ENCODE measurements at regions of chr5 and their contacts with region 1.

Region 1: DNA sequence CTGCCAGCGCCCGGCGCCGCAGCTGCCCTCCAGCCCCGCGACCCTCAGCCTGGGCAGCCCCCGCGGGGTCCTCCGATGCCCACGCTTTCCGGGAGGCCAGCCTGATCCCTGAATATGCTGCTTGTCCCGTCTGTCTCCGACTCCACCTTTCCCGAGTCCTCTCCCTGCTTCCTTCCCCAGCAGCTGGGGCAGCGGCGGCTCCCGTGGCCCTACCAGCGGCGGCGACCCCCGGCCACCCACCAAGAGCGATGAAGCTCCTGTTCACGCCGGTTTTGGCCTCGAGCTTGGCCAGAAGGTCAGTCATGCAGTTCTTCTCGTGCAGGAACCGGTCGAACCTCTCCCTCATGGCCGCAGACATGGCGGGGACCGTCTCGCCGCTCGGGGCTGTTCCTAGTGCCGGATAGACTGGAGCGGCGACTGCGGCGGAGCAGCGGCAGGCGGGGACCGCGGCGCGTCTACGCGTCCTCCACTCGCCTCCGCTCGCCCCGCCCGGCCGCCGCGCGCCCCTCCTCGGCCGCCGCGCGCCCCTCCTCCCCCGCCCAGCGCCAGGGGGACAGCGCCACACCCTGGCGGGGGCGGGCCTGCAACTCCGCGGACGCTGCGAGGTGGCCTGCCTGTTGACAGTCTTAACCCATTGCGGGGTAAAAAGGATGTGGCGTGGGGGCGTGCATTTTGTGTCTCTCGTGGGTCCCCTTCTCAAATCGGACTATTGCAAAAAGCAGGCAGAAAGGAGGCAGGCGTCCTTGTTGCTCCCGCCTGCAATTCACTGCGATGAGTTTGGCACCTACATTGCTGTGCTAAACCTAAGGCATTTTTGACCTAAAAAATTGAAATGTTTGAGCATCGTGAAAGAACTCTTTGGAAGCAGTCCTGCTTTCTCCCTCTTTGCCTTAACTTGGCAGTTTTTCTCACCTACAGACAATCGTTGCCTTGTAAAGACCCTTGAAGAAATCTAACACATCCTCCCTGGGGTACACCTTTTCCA is at the start of gene REEP5:
- DNase-seq: peak; percentile 91
- total RNA-seq, gene REEP5: 119 TPM

Region 2: DNA sequence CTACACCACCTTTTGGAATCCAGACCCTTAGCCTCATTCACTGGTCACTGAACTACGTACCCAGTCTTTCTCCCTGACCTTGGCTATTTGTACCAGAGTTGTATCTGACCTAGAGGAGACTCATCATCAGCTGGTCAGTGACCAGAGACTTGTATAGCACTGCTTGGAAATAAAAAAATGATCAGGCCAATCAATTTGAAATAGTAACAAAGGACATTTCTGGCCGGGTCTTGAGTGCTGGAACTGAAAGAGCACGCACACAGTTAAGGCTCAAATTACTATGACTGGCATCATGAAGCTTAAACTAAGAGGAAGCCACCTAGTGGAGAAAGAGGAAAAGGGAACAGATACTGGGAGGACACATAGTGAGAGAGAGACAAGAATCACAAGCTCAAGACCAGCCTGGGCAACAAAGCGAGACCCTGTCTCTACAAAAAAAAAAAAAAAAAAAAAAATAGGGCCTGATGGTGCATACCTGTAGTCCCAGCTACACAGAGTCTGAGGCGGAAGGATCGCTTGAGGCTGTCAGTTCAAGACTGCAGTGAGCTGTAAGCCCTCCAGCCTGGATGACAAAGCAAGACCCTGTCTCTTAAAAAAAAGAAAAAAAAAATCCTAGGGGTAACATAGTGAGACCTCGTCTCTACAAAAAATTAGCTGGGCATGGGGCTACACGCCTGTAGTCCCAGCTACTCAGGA is 73.9 kb before region 1 on chr5:
- intact Hi-C with region 1: loop called (anchors 5 kb)
- DNase-seq: no peak

Region 3: DNA sequence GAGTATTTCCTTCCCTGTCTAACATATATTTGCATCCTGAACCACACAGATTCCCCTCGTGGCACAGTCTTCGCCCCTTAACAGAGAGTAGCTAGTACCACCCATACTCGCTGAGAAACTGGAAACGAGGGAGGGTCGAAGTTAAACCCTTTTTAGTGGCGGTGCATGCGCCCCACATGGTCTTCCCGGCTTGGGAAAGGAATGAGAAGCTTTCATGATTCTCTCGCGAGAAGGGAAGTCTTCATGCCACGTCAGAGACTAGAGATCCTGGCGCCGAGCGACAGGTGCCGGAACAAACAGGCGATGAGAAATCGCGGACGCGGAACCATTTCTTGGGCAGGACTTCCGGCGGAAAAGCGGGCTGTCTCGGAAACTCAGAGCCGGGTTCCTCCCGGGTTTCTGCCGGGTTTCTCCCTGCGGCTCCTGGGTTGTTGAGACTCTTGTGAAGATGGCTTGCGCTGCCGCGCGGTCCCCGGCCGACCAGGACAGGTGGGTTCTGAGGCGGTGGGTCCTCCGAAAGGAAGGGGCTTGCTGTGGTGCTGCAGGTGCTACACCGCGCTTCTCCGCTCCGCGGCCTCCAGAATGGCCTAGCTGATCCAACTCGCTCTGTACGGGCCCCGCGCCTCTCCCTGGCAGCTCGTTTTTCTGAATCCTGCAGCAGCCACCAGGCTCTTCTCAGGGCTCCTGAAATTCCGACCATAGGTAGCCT is 61.0 kb before region 1 on chr5 and contains the start of gene SRP19:
- intact Hi-C with region 1: loop called (anchors 2 kb)
- DNase-seq: peak; percentile 98
- total RNA-seq, gene SRP19: 32.4 TPM

Region 4: DNA sequence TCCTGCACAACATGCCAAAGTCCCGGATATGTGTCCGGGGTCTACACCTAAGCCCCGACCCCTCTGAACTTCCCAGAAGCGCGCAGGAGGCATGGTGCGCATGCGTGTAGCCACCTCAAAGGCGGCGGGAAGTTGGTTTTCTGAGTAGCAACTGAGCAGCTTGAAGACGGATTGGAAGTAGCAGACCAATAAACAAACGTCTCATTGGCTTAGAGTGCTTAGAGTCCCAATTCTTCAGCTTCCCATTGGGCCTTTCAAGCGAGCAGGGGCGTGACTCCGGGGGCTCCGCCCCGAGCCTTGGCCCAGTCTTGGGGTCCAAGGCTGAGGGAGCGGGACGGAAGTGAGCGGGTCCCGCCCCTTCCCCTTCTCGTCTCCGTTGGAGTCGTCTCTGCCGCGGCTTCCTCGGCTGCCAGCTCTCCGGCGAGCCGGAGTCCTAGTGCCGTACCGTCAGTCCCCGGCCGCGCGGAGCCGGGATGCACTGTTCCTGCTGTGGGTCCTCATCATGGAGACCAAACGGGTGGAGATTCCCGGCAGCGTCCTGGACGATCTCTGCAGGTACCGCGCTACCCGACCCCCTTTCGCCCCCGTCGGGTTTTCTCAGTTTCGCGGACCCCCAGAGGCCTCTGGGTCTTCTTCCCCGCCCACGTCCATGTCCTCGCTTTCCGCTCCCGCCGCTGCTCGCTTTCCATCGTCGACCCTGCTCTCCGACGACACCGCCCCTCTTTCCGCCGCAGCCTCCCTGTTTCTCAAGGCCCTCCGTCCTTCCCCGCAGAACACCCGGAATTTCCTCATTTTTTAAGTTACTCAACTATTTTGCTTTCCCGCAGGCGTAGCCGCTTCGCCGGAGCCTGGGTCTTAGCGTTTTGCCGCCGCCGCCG is 54.5 kb after region 1 on chr5 and contains the start of gene DCP2:
- intact Hi-C with region 1: loop called (anchors 1 kb)
- DNase-seq: peak; percentile 97
- total RNA-seq, gene DCP2: 21.8 TPM